ENCODE measurements at regions of chr7 and their contacts with region 1.

Region 1: DNA sequence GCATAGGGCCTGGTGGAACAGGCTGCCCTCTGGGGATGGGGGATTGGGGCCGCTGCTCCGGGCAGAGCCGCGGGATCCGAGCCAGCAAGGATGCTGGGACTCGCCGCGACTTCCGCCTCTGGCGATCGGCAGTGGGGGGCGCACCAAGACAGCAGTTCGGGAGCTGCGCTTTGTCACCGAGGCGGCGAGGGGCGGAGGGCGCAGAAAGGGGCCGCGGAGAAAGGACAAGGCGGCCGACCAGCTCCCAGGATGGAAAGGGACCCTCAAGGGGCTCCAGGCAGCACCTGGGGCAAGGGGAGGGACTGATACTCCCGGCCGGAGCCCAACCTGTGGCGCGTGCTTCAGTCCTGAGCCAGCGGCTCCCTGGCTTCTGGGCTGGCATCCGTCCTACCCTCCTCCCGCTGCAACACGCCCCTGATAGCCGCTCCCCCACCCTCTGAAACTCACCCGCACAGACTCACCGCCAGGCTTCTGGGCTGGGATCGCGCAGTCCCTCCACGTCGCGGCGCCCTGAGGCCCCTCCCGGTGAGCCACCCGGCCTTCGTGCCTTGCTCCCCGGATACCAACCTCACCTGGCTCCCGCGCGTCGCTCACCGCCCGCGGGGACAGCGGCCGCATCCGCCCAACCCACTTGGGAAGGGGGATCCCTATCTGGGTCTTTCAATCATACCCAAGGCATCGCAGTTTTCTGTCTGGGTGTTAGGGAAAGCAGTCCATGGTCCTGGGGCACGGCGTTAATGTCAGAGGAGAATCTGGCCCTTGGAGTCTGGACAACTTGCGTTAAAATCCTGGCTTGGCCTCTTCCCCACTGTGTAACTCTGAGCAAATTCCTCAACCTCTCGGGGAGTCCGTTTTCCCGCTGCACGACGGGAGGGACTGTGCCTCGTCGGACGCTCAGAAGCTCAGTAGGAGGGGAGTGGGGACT is 7.0 kb upstream of the EVX1 start:
- DNase-seq: peak; percentile 32
- H3K4me3 Mint-ChIP-seq: no peak overlapping the region
- H3K27ac Mint-ChIP-seq: no peak overlapping the region
- H3K4me1 Mint-ChIP-seq: peaks cover 11% of the 10 kb centered on the region
- H3K27me3 Mint-ChIP-seq: peaks cover 60% of the 10 kb centered on the region

Region 2: DNA sequence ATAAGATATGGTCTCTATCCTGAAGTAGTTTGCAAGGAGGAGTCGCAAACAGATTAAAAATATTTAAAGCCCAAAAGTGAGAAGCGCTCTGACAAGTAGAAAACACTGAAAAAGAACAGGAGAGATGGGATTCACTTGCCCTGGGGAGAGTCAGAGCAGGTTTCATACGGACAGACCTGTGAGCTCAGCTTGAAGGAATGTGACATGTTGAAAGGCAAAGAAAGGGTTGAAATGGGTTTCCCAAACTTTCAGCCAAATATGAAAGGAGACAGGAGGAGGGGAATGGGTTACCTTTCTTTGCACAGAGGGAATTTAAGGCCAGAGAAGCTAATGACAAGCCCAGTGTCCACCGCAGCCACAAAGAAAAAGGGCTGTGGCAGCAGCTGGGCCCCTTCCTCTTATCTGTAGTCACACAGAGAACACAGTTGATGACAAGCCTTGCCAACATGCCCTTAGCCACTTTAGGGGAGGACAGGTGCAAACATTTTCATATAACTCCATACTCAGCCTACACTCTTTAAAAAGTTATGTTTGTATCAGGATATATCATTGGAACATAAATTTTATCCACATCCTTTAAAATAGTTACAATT is 154.7 kb before region 1 on chr7:
- CTCF ChIA-PET with region 1: no interaction called
- POLR2A ChIA-PET with region 1: no interaction called
- intact Hi-C with region 1: no loop called
- DNase-seq: no peak
- H3K4me3 Mint-ChIP-seq: no peak overlapping the region
- H3K27ac Mint-ChIP-seq: no peak overlapping the region
- H3K4me1 Mint-ChIP-seq: no peaks in the 10 kb centered on the region
- H3K27me3 Mint-ChIP-seq: peaks cover 4% of the 10 kb centered on the region

Region 3: DNA sequence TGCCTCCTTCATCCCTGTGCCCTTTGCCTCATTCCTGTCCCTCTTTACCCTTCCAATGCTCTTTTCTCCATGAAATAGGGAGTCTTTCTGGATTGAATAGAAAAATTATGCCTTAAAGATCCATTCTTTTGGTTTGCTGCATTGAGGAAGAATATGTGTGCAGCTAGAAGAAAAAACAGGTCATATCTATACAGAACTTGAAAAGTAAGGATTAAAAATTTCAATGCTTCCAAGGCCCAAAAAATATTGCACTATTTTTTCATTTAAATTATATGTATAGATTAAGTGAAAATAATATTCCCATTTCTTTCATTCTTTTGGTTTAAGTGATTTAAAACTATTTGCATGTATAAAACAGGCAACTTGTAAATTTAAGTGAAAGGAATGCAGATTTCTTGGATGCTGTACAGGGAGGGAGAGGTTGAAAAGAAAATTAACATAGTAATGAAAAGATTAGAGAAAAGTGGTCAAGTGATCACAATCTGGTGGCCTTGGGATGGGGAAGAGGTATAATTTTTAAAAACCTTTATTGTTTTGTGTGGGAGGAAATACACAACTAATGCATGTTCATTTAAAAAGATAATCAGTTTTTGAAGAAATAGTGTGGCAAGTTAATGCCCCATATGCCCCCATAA is 11.6 kb before region 1 on chr7:
- CTCF ChIA-PET with region 1: no interaction called
- POLR2A ChIA-PET with region 1: interaction called, 4 read pairs
- intact Hi-C with region 1: loop called (anchors 2 kb)
- DNase-seq: no peak
- H3K4me3 Mint-ChIP-seq: no peak overlapping the region
- H3K27ac Mint-ChIP-seq: no peak overlapping the region
- H3K4me1 Mint-ChIP-seq: peaks cover 5% of the 10 kb centered on the region
- H3K27me3 Mint-ChIP-seq: peaks cover 57% of the 10 kb centered on the region